ENCODE measurements at regions of chr9 and their contacts with region 1.

Region 1: DNA sequence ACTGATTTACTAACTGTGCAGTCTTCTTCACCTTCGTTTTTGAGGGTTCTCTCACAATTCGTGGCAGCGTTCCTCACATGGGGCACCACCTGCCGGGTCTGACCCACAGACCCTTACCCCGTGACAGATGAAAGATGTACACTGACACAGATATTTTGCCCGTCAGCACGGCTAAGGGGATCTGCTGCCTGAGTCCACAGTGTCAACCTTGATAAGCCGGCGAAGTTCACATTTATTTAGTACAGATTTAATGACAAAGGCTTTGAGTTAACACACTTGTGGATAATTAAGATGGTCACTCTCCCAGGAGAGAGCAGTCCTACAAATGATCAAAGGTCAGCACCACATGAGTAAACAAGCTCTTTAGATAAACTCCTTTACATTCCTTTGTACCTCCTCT is 15.9 kb upstream of the TEX10 start:
- DNase-seq: no peak
- H3K4me3 ChIP-seq: no peak overlapping the region
- H3K4me3 Mint-ChIP-seq: no peak overlapping the region
- H3K27ac ChIP-seq: no peak overlapping the region
- H3K27ac Mint-ChIP-seq: no peak overlapping the region
- H3K4me1 ChIP-seq: no peaks in the 10 kb centered on the region
- H3K4me1 Mint-ChIP-seq: peaks cover 1% of the 10 kb centered on the region
- H3K27me3 ChIP-seq: no peaks in the 10 kb centered on the region
- H3K27me3 Mint-ChIP-seq: peaks cover 0 to 2% (median 0%) of the 10 kb centered on the region in 3 donors
- CTCF ChIP-seq: no peak

Region 2: DNA sequence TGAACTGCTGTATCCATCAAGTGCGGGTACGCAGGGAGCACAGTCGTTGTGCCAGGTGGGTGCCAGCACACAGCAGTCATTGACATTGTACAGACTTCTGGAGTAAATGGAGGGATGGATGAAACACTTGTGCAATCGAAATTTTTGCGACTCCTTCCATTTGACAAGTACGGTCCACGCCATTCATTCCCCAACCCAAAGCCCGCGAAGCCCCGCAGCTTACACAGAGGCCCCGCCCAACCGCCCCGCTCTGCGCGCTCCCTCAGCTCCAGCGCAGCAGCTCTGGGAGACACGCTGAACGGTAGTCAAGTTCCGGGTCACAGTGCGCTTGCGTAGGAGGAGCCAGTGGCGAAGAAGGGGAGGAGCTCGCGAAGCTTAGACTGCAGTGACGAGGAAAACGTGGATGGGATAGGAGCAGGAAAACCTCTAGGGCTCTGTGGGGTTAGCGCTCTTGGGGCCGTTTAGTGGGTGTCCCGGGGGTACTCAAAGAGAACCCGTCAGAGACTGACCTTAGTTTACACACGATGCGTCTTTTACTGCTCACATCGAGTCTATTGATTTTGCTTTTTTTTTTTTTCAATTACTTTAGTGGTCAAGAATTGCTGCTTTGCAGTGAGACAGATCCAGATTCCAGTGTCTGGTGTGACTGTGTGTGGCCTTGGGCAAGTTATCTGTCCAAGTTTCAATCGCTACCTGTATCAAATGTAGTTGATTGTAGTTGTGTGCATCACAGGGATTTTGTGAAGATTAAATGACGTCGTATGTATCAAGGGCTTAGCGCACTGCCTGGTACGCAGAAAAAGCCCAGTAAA is 43.0 kb after region 1 on chr9:
- intact Hi-C with region 1: loop called in 1 of 2 experiments (anchors 10 kb)
- DNase-seq: peak; percentile 79 to 90 (median 89)
- H3K4me3 ChIP-seq: peak overlapping the region; percentile 36 to 83 (median 41)
- H3K4me3 Mint-ChIP-seq: peak overlapping the region; percentile 87 to 95
- H3K27ac ChIP-seq: peak overlapping the region in 1 of 2 donors; percentile 65
- H3K27ac Mint-ChIP-seq: peak overlapping the region; percentile 34 to 86 (median 79)
- H3K4me1 ChIP-seq: peaks cover 22% of the 10 kb centered on the region in 2 donors
- H3K4me1 Mint-ChIP-seq: peaks cover 22% of the 10 kb centered on the region
- H3K27me3 ChIP-seq: no peaks in the 10 kb centered on the region
- H3K27me3 Mint-ChIP-seq: peaks cover 2 to 6% (median 2%) of the 10 kb centered on the region in 3 donors
- CTCF ChIP-seq: no peak

Measured in CD14-positive monocyte (primary cell).